ENCODE measurements at regions of chr2 and their contacts with region 1.

Region 1: DNA sequence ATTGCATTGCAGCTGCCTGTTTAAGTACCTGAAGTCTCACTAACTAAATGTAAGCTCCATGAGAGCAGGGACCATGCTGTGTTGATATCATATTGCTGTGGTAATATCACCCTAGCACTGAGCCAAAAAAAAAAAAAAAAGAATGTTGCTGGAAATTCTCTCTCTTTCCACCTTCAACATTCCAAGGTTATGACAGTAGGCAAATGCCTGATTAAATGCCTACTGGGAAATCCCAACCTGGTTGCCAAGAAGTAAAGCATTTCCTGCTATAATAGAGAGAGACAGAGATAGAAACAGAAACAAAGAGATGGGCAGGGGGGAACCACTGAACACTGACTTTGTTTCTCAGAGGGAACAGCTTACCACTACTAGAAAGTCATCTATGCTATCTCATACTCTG is 1604.2 kb downstream of the LRP1B start:
- DNase-seq: no peak
- ATAC-seq: no peak
- H3K4me3 ChIP-seq: no peak overlapping the region
- H3K27ac ChIP-seq: no peak overlapping the region
- H3K4me1 ChIP-seq: no peaks in the 10 kb centered on the region
- H3K27me3 ChIP-seq: no peaks in the 10 kb centered on the region
- CTCF ChIP-seq: no peak
- POLR2A ChIP-seq: no peak
- RAD21 ChIP-seq: no peak

Region 2: DNA sequence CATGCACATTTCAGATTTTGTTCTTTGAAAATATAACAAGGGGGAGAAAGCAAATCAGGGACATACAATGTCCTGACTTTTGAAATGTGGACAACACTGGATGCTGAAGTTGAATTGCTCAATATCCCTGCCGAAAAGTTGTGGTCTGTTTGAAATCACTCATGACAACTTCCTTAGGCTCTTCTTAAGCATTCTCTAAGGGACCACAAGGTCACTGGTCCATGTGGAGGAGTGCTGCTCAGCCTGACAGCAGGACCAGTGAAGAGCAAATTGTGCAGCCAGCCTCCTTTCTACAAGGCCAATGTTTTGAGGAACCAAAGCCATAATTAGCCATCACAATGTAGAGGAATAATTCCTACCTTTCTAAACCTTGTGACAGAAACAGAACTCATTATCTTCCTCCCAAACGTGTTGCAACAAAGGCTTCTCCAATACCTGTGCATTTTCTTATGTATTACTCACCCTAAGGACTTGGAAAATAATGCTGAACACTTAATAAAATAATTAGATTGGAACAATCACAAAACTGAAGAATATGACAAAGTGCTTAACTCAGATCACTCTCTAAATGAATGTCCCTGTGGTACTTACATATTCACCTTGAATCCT is 268.8 kb before region 1 on chr2:
- CTCF ChIA-PET with region 1: no interaction called
- POLR2A ChIA-PET with region 1: interaction called, 13 read pairs
- dilution Hi-C with region 1: no loop called
- in situ Hi-C with region 1: no loop called
- intact Hi-C with region 1: no loop called
- DNase-seq: no peak
- ATAC-seq: no peak
- H3K4me3 ChIP-seq: no peak overlapping the region
- H3K27ac ChIP-seq: no peak overlapping the region
- H3K4me1 ChIP-seq: no peaks in the 10 kb centered on the region
- H3K27me3 ChIP-seq: no peaks in the 10 kb centered on the region
- CTCF ChIP-seq: no peak
- POLR2A ChIP-seq: no peak
- RAD21 ChIP-seq: no peak

Region 3: DNA sequence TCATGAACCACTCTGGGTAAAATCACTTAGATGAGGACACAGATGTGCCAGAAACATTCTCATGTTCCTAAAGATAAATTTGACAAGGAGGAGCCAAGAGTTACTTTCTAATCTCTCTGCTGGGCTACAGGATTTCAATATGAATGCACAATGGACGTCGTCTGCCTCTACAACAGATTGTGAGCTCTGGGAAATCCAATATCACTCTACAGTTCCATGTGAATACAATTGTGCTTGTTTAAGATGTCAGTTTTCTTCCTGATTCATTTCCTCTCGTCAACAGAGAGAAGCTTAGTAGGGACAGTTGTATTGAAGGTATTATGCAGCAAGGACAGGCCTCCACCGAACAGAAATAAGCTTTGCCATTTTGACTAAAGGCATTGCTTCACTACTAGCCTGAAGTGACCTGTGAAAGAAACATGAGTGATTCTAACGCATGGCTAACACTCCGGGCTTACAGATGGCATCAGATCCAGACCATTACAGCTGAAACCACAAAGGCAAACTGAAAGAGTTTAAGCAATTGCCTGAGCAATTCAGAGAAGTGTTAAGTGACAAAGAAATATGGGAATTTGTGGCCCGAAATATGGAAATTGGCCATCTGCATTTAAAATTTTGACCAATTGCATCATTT is 12.8 kb after region 1 on chr2:
- CTCF ChIA-PET with region 1: no interaction called
- POLR2A ChIA-PET with region 1: no interaction called
- dilution Hi-C with region 1: no loop called
- in situ Hi-C with region 1: no loop called
- intact Hi-C with region 1: loop called (anchors 2 kb)
- DNase-seq: no peak
- ATAC-seq: no peak
- H3K4me3 ChIP-seq: no peak overlapping the region
- H3K27ac ChIP-seq: no peak overlapping the region
- H3K4me1 ChIP-seq: no peaks in the 10 kb centered on the region
- H3K27me3 ChIP-seq: no peaks in the 10 kb centered on the region
- CTCF ChIP-seq: no peak
- POLR2A ChIP-seq: no peak
- RAD21 ChIP-seq: no peak

Measured in IMR-90 (cell line).